Dorsolateral prefrontal cortex (tissue), 120 donors: ENCODE measurements at regions of chr6 and their contacts with region 1.

Region 1: DNA sequence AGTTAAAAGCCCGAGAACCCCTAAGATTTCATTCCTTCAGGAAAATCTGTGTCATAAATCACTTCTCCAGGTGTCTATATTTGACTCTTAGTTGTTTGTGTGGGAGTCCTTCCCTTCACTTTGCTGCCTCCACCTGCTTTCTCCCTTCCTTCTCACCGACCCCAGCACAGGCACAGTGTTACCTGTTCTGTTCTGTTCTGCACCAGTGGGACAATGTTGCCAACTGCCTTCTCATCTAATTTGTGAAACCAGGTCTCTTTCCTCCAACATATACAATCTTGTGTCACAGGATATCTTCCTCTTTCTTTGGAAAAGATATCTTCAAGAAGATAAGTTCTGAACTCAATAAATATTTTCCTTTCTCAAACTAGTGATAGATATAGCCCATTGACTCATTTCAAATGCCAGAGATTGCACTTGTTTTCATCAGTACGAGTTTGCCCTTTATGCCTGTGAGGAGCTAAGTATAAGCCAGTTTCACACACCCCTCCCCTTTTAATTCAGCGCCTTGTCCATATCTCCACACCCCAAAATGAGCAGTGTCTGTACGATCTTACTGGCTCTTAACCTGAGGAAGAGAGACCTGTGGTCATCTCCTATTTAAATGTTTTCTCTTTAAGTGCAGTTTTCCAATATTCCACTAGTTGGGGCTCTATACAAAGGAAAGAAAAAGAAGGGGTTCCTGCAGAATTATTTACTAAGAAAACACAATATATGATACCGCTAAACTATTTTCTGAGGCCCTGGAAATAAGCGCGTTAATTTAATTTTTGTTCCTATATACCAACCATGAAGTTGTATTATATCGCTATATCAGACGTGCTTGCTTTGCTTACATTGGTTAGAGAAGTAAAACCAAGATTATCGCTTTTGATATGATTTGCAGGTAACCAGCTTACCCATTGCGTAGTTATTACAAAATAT is 81.6 kb upstream of the PREP start:
- DNase-seq: no peak
- H3K4me3 ChIP-seq: peak overlapping the region in 7 of 59 donors; percentile 10 to 31 (median 23)
- H3K27ac ChIP-seq: peak overlapping the region in 1 of 59 donors; percentile 39
- H3K27me3 ChIP-seq: no peaks in the 10 kb centered on the region
- CTCF ChIP-seq: peak; percentile 67 to 95 (median 82)

Region 2: DNA sequence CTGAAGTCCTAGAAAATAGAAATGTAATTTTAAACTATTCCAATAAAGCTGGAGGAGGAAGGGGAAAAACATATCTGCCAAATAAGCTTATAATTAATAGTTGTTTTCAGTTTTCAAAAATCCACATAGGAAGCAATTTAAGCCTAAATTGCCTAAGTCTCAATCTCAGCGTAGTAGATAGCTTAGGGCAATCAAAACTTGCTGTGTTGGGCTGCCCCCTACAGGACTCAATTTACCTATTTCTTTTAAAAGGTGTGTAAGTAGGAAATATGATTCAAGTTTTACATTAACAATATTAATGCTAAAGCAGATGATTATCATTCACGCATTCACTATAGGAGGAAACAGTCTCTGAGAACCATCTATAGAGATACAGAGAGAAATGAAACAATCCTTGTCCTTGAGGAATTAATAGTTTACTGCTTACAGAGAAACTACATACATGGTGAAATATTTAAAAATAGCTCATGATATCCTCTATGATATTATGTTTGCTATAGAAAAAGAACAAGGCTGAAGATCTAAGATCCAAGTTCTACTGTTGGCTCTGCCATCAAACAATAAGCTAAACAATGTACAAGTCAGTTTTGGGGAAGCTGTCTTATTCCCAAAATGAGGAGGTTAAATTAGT is 738.9 kb after region 1 on chr6:
- intact Hi-C with region 1: loop called in 1 of 2 experiments (anchors 10 kb)
- DNase-seq: peak in 6 of 10 donors; percentile 37 to 76 (median 52)
- H3K4me3 ChIP-seq: no peak overlapping the region
- H3K27ac ChIP-seq: no peak overlapping the region
- H3K27me3 ChIP-seq: no peaks in the 10 kb centered on the region
- CTCF ChIP-seq: peak; percentile 45 to 84 (median 69)

Region 3: DNA sequence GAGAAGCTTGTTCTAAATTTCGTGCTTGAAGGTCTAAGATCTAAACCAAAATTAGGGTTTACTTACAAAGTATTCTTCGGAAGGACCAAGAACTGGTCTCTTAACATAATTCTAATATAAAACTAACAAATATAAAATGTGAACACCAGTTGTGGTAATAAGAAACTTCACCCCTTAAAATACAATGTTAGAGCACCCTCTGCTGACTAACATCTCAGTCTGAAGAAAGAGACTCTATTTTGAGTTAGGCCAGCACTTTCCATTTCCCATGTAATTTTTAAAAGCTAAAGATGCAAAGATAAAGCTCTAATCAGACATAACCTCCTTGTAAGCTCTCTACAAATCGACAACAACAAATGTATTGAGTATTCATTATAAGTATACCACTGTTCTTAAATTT is 816.4 kb after region 1 on chr6:
- intact Hi-C with region 1: loop called in 1 of 2 experiments (anchors 10 kb)
- DNase-seq: no peak
- H3K4me3 ChIP-seq: no peak overlapping the region
- H3K27ac ChIP-seq: no peak overlapping the region
- H3K27me3 ChIP-seq: no peaks in the 10 kb centered on the region
- CTCF ChIP-seq: peak; percentile 27 to 81 (median 58)